CD4-positive, alpha-beta T cell (primary cell): ENCODE measurements at regions of chr1 and their contacts with region 1.

Region 1: GRCh38 chr1:111619635-111620440 is at the start of gene RAP1A:
- DNase-seq: peak; percentile 88 to 98 (median 95)
- ATAC-seq: peak; percentile 75
- H3K4me3 ChIP-seq: peak within 1 kb of the TSS; percentile 81
- H3K4me3 Mint-ChIP-seq: peak within 1 kb of the TSS; percentile 98
- H3K27ac ChIP-seq: peak within 1 kb of the TSS; percentile 76 to 90
- H3K27ac Mint-ChIP-seq: peak within 1 kb of the TSS; percentile 95
- H3K4me1 ChIP-seq: peaks cover 60% of the 10 kb centered on the region
- H3K4me1 Mint-ChIP-seq: peaks cover 82% of the 10 kb centered on the region
- H3K27me3 ChIP-seq: no peaks in the 10 kb centered on the region
- H3K27me3 Mint-ChIP-seq: no peaks in the 10 kb centered on the region
- CTCF ChIP-seq: no peak
- total RNA-seq, gene RAP1A: 63.8 to 67.1 TPM

Region 2: GRCh38 chr1:111441573-111442192 is 178.2 kb before region 1 on chr1:
- CTCF ChIA-PET with region 1: no interaction called
- POLR2A ChIA-PET with region 1: no interaction called
- intact Hi-C with region 1: no loop called
- DNase-seq: peak; percentile 58 to 83 (median 70)
- ATAC-seq: peak; percentile 98
- H3K4me3 ChIP-seq: no peak overlapping the region
- H3K4me3 Mint-ChIP-seq: no peak overlapping the region
- H3K27ac ChIP-seq: no peak overlapping the region
- H3K27ac Mint-ChIP-seq: peak overlapping the region; percentile 84
- H3K4me1 ChIP-seq: peaks cover 14% of the 10 kb centered on the region
- H3K4me1 Mint-ChIP-seq: peaks cover 54% of the 10 kb centered on the region
- H3K27me3 ChIP-seq: no peaks in the 10 kb centered on the region
- H3K27me3 Mint-ChIP-seq: no peaks in the 10 kb centered on the region
- CTCF ChIP-seq: peak; percentile 80

Region 3: GRCh38 chr1:111516005-111516535 is 103.8 kb before region 1 on chr1:
- CTCF ChIA-PET with region 1: no interaction called
- POLR2A ChIA-PET with region 1: interaction called, 10 read pairs
- intact Hi-C with region 1: no loop called
- DNase-seq: peak in 7 of 14 experiments; percentile 20 to 76 (median 45)
- ATAC-seq: peak; percentile 84
- H3K4me3 ChIP-seq: peak overlapping the region; percentile 58
- H3K4me3 Mint-ChIP-seq: peak overlapping the region; percentile 73
- H3K27ac ChIP-seq: no peak overlapping the region
- H3K27ac Mint-ChIP-seq: peak overlapping the region; percentile 66
- H3K4me1 ChIP-seq: peaks cover 68% of the 10 kb centered on the region
- H3K4me1 Mint-ChIP-seq: peaks cover 40% of the 10 kb centered on the region
- H3K27me3 ChIP-seq: no peaks in the 10 kb centered on the region
- H3K27me3 Mint-ChIP-seq: no peaks in the 10 kb centered on the region
- CTCF ChIP-seq: peak; percentile 50

Region 4: GRCh38 chr1:111592389-111593361 is 27.2 kb before region 1 on chr1:
- CTCF ChIA-PET with region 1: interaction called, 6 read pairs
- POLR2A ChIA-PET with region 1: interaction called, 32 read pairs
- intact Hi-C with region 1: loop called (anchors 2 kb)
- DNase-seq: peak; percentile 66 to 96 (median 88)
- ATAC-seq: peak; percentile 92
- H3K4me3 ChIP-seq: no peak overlapping the region
- H3K4me3 Mint-ChIP-seq: peak overlapping the region; percentile 49
- H3K27ac ChIP-seq: peak overlapping the region; percentile 43 to 64
- H3K27ac Mint-ChIP-seq: peak overlapping the region; percentile 79
- H3K4me1 ChIP-seq: peaks cover 54% of the 10 kb centered on the region
- H3K4me1 Mint-ChIP-seq: peaks cover 59% of the 10 kb centered on the region
- H3K27me3 ChIP-seq: no peaks in the 10 kb centered on the region
- H3K27me3 Mint-ChIP-seq: no peaks in the 10 kb centered on the region
- CTCF ChIP-seq: no peak

Region 5: DNA sequence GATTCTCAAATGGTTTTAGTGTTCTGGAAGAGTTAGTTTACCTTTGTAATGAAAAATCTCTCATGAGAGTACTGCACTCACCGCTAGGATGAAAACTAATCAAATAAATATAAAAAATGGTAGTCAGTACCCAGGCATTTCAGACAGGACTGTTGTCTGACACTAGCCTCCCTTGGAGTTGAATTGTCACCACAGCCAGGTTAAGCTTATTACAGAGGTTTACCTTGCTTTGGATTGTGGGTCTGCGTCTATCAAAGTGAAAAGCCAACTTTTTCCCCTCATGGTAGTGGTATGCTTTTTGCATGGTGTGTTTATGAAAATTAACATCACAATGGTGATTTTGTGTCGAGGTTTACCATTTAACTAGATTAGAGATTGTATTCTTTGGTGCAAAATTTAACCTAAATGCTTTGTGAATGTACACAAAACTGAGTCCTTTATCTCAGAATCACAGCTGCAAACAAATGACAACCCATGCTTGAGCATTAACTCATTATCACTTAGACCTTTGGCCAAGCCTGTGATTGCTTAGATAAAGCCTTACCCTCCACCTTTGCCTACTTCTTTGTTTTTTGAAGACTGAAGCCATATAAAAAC is 19.9 kb after region 1 on chr1:
- CTCF ChIA-PET with region 1: no interaction called
- POLR2A ChIA-PET with region 1: interaction called, 5 read pairs
- intact Hi-C with region 1: loop called in 1 of 2 experiments (anchors 2 kb)
- DNase-seq: no peak
- ATAC-seq: no peak
- H3K4me3 ChIP-seq: no peak overlapping the region
- H3K4me3 Mint-ChIP-seq: no peak overlapping the region
- H3K27ac ChIP-seq: no peak overlapping the region
- H3K27ac Mint-ChIP-seq: peak overlapping the region; percentile 61
- H3K4me1 ChIP-seq: peaks cover 20% of the 10 kb centered on the region
- H3K4me1 Mint-ChIP-seq: peaks cover 79% of the 10 kb centered on the region
- H3K27me3 ChIP-seq: no peaks in the 10 kb centered on the region
- H3K27me3 Mint-ChIP-seq: no peaks in the 10 kb centered on the region
- CTCF ChIP-seq: no peak

Region 6: GRCh38 chr1:111755331-111756123 is 135.7 kb after region 1 on chr1 and contains the start of gene DDX20:
- CTCF ChIA-PET with region 1: no interaction called
- POLR2A ChIA-PET with region 1: no interaction called
- intact Hi-C with region 1: loop called in 1 of 2 experiments (anchors 2 kb)
- DNase-seq: peak; percentile 87 to 97 (median 92)
- ATAC-seq: peak; percentile 85
- H3K4me3 ChIP-seq: peak within 1 kb of the TSS; percentile 89
- H3K4me3 Mint-ChIP-seq: peak within 1 kb of the TSS; percentile 89
- H3K27ac ChIP-seq: peak within 1 kb of the TSS; percentile 89 to 95
- H3K27ac Mint-ChIP-seq: peak within 1 kb of the TSS; percentile 96
- H3K4me1 ChIP-seq: peaks cover 24% of the 10 kb centered on the region
- H3K4me1 Mint-ChIP-seq: peaks cover 45% of the 10 kb centered on the region
- H3K27me3 ChIP-seq: no peaks in the 10 kb centered on the region
- H3K27me3 Mint-ChIP-seq: no peaks in the 10 kb centered on the region
- CTCF ChIP-seq: peak; percentile 89
- total RNA-seq, gene DDX20: 27.2 to 27.4 TPM

Region 7: DNA sequence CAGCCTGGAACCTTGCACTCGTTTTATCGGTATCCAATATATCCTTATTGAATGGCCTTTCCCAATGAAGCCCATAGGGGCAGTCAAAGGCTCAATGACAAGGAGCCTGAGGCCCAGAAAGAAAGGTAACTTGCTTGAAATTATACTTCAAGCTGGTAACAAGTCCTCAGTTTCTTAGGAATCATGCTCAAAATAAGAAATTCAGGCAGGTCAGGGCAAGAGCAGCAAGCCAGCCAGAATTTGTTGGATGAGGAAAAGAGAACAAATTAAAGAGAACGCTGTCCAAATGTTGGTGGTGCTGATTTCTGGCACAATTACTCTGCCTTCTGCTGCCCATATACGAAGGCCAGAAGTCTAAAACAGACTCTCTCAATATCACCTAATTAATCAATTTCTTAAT is 213.5 kb after region 1 on chr1:
- CTCF ChIA-PET with region 1: no interaction called
- POLR2A ChIA-PET with region 1: no interaction called
- intact Hi-C with region 1: no loop called
- DNase-seq: no peak
- ATAC-seq: no peak
- H3K4me3 ChIP-seq: no peak overlapping the region
- H3K4me3 Mint-ChIP-seq: no peak overlapping the region
- H3K27ac ChIP-seq: no peak overlapping the region
- H3K27ac Mint-ChIP-seq: no peak overlapping the region
- H3K4me1 ChIP-seq: no peaks in the 10 kb centered on the region
- H3K4me1 Mint-ChIP-seq: no peaks in the 10 kb centered on the region
- H3K27me3 ChIP-seq: peaks cover 5 to 7% of the 10 kb centered on the region in 2 experiments
- H3K27me3 Mint-ChIP-seq: peaks cover 42% of the 10 kb centered on the region
- CTCF ChIP-seq: no peak